Heart left ventricle (tissue), 16 donors: ENCODE measurements at regions of chr1 and their contacts with region 1.

Region 1: DNA sequence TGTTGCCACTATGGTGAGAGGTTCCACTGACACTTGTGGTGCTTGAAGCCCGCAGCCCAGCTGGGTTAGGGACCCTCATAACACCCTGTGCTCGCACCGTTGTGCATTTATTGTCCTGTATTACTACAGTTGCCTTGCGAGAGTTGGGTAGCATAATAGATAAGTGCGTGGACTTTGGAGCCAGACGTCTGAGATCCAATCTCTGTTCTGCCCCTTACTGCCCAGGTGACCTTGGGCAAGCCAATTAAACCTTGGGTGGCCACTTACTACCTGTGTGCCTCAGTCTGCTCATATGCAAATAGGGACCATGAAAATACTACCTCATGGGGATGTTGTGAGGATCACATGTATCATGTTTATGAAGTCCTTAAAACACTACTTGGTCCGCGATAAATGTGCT is 13.3 kb downstream of the C8B start:
- DNase-seq: no peak
- ATAC-seq: no peak
- H3K4me3 ChIP-seq: no peak overlapping the region
- H3K27ac ChIP-seq: no peak overlapping the region
- H3K4me1 ChIP-seq: no peaks in the 10 kb centered on the region
- H3K27me3 ChIP-seq: peaks cover 0 to 3% (median 0%) of the 10 kb centered on the region in 9 donors
- CTCF ChIP-seq: no peak
- POLR2A ChIP-seq: no peak

Region 2: DNA sequence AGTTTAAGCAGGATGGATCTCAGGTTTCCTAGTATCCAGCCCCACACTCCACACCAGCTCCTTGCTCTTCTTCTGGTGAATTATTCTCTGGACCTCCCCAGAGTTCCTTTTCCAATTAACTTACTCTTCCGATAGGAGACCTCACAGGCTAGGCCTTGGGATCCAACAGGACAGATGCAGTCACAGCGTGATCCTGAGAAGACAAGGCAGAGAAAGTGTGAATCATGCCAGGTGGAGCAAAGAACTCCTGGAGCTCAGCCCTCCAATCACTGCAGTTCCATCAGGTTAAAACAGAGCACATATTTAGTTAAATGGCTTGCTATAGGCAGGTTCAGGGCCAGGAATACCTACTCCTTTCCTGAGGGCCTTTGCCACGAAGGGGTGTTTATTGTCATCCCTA is 20.8 kb before region 1 on chr1:
- intact Hi-C with region 1: loop called in 1 of 10 experiments (anchors 2 kb)
- DNase-seq: no peak
- ATAC-seq: no peak
- H3K4me3 ChIP-seq: no peak overlapping the region
- H3K27ac ChIP-seq: no peak overlapping the region
- H3K4me1 ChIP-seq: no peaks in the 10 kb centered on the region
- H3K27me3 ChIP-seq: no peaks in the 10 kb centered on the region
- CTCF ChIP-seq: no peak
- POLR2A ChIP-seq: no peak